ENCODE measurements at regions of chr12 and their contacts with region 1.

Region 1: DNA sequence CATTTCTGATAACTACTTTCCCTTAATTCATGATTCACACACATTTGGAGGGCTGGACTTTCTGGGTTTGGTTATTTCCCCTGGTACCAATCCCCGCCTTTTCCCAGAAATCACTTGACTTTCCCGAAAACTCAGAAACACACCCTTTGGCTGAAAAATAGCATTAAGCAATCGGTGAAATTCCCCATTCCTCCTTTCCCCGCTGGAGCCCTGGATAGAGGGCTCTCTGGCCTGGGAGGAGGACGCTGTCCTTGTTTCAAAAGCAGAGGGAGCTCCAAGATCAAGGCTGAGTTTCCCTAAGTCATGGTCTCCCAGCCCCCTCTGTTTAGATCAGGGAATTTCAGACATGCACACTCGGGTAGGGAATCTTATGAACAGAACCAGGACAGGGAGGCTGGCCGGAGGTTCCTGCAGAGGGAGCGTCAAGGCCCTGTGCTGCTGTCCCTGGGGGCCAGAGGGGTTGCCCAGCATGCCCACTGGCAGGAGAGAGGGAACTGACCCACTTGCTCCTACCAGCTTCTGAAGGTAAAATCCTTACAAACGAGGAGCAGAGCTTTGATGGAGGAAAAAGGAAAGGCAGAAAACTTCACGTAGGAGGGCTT is at the start of gene C1S:
- DNase-seq: peak; percentile 98
- H3K4me3 Mint-ChIP-seq: peak within 1 kb of the TSS; percentile 63
- H3K27ac Mint-ChIP-seq: peak within 1 kb of the TSS; percentile 87
- H3K4me1 Mint-ChIP-seq: peaks cover 20% of the 10 kb centered on the region
- H3K27me3 Mint-ChIP-seq: peaks cover under 1% of the 10 kb centered on the region
- CTCF ChIP-seq: peak; percentile 70
- total RNA-seq, gene C1S: 6.0 and 11.5 TPM in 2 replicates

Region 2: GRCh38 chr12:6937481-6938297 is 122.8 kb before region 1 on chr12:
- CTCF ChIA-PET with region 1: no interaction called
- POLR2A ChIA-PET with region 1: no interaction called
- intact Hi-C with region 1: no loop called
- DNase-seq: peak; percentile 94
- H3K4me3 Mint-ChIP-seq: peak overlapping the region; percentile 71
- H3K27ac Mint-ChIP-seq: peak overlapping the region; percentile 52
- H3K4me1 Mint-ChIP-seq: peaks cover 31% of the 10 kb centered on the region
- H3K27me3 Mint-ChIP-seq: no peaks in the 10 kb centered on the region
- CTCF ChIP-seq: peak; percentile 88

Region 3: DNA sequence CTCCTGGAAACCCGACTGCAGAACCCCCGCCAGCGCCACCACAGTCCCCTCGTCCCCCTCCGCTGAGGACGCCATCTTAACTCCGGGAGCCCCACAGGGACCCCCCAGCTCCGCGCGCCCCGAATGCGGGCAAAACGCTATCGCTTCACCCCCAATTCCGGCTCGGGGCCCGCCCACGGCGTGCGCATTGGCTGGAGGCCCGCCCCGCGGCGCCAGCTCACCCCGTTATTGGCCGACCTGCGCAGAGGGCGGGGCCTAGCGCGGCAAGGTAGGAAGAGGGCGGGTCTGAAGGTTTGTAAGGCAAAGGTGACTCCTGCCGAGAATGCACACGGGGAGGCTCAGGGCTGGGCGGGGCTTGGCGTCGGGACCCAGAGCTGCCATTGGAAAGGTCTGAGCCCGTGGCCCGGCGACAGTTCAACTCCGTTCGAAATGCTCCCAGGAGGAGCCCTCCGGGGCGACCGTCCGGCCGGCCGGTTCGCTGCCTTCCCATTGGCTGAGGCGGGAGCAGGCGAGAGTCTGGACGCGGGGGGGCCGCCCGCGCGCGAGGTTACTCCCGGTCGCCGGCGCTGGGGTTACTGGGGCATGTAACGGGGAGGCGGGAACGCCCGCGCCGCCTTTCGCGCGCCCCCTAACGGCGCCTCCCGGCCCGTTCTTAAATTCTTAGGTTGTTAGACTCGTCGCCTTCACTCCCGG is 42.0 kb before region 1 on chr12 and contains the start of gene LPCAT3:
- CTCF ChIA-PET with region 1: interaction called, 4 read pairs
- POLR2A ChIA-PET with region 1: interaction called, 12 read pairs
- intact Hi-C with region 1: no loop called
- DNase-seq: peak; percentile 96
- H3K4me3 Mint-ChIP-seq: peak within 1 kb of the TSS; percentile 80
- H3K27ac Mint-ChIP-seq: peak within 1 kb of the TSS; percentile 29
- H3K4me1 Mint-ChIP-seq: peaks cover 32% of the 10 kb centered on the region
- H3K27me3 Mint-ChIP-seq: no peaks in the 10 kb centered on the region
- CTCF ChIP-seq: peak; percentile 77
- total RNA-seq, gene LPCAT3: 14.4 and 15.4 TPM in 2 replicates

Region 4: DNA sequence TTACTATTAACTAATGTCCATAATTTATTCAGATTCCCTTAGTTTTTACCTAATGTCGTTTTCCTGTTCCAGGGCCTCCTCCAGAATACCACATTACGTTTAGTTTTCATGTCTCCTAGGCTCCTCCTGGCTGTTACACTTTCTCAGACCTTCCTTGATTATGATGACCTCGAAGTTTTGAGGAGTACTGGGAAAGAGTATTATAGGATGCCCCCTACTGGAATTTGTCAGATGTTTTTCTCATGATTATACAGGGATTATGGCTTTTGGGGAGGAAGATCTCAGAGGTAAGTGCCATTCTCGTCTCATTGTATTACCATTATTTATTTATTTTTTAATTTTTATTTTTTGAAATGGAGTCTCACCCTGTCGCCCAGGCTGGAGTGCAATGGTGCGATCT is 17.6 kb before region 1 on chr12:
- CTCF ChIA-PET with region 1: interaction called, 20 read pairs
- POLR2A ChIA-PET with region 1: interaction called, 3 read pairs
- intact Hi-C with region 1: no loop called
- DNase-seq: peak; percentile 71
- H3K4me3 Mint-ChIP-seq: no peak overlapping the region
- H3K27ac Mint-ChIP-seq: peak overlapping the region; percentile 25
- H3K4me1 Mint-ChIP-seq: peaks cover 23% of the 10 kb centered on the region
- H3K27me3 Mint-ChIP-seq: no peaks in the 10 kb centered on the region
- CTCF ChIP-seq: peak; percentile 34

Region 5: GRCh38 chr12:7079826-7080125 is 19.3 kb after region 1 on chr12:
- CTCF ChIA-PET with region 1: interaction called, 24 read pairs
- POLR2A ChIA-PET with region 1: interaction called, 16 read pairs
- intact Hi-C with region 1: loop called (anchors 1 kb)
- DNase-seq: peak; percentile 89
- H3K4me3 Mint-ChIP-seq: peak overlapping the region; percentile 46
- H3K27ac Mint-ChIP-seq: peak overlapping the region; percentile 73
- H3K4me1 Mint-ChIP-seq: peaks cover 26% of the 10 kb centered on the region
- H3K27me3 Mint-ChIP-seq: no peaks in the 10 kb centered on the region
- CTCF ChIP-seq: no peak

Region 6: GRCh38 chr12:7092229-7092985 is 32.0 kb after region 1 on chr12 and contains the start of gene C1R:
- CTCF ChIA-PET with region 1: interaction called, 116 read pairs
- POLR2A ChIA-PET with region 1: interaction called, 96 read pairs
- intact Hi-C with region 1: loop called (anchors 1 kb)
- DNase-seq: peak; percentile 88
- H3K4me3 Mint-ChIP-seq: peak within 1 kb of the TSS; percentile 79
- H3K27ac Mint-ChIP-seq: peak within 1 kb of the TSS; percentile 93
- H3K4me1 Mint-ChIP-seq: peaks cover 26% of the 10 kb centered on the region
- H3K27me3 Mint-ChIP-seq: no peaks in the 10 kb centered on the region
- CTCF ChIP-seq: peak; percentile 75
- total RNA-seq, gene C1R: 13.1 and 16.7 TPM in 2 replicates

Region 7: GRCh38 chr12:7188562-7189397 is 128.3 kb after region 1 on chr12:
- CTCF ChIA-PET with region 1: interaction called, 4 read pairs
- POLR2A ChIA-PET with region 1: no interaction called
- intact Hi-C with region 1: loop called (anchors 1 kb)
- DNase-seq: peak; percentile 84
- H3K4me3 Mint-ChIP-seq: peak overlapping the region; percentile 93
- H3K27ac Mint-ChIP-seq: peak overlapping the region; percentile 98
- H3K4me1 Mint-ChIP-seq: peaks cover 27% of the 10 kb centered on the region
- H3K27me3 Mint-ChIP-seq: no peaks in the 10 kb centered on the region
- CTCF ChIP-seq: peak; percentile 61

Region 8: DNA sequence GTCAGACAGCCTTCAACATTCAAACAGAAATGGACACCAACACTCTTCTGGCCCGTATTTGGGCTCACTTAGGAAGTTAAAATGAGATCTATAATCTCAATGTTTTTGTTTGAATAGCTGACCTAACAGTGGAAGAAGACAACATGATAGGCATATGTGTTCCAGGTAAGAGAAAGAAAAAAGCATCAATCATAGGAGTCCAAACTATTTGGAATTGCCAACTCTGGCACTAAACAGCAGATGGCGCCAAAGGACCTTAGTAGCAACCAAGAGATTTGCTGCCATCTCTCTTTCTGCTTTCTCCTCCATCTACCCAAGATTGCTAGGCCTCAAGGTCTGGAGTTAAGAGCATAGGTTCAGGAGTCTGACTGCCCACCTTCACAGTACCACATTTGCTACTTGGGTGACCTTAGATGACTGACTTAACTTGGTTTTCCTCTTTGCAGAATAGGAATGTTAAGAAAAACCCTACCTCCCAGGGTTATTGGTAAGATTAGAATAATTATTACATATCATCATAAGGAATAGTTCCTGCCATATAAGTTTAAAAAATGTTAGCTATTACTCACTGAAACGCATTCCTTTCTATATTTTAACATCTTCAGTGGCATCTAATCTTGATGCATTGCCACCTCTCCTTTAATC is 159.3 kb after region 1 on chr12:
- CTCF ChIA-PET with region 1: no interaction called
- POLR2A ChIA-PET with region 1: no interaction called
- intact Hi-C with region 1: loop called (anchors 1 kb)
- DNase-seq: peak; percentile 80
- H3K4me3 Mint-ChIP-seq: no peak overlapping the region
- H3K27ac Mint-ChIP-seq: no peak overlapping the region
- H3K4me1 Mint-ChIP-seq: no peaks in the 10 kb centered on the region
- H3K27me3 Mint-ChIP-seq: peaks cover 23% of the 10 kb centered on the region
- CTCF ChIP-seq: peak; percentile 84

Region 9: GRCh38 chr12:7656121-7656520 is 595.7 kb after region 1 on chr12:
- CTCF ChIA-PET with region 1: no interaction called
- POLR2A ChIA-PET with region 1: no interaction called
- intact Hi-C with region 1: no loop called
- DNase-seq: no peak
- H3K4me3 Mint-ChIP-seq: no peak overlapping the region
- H3K27ac Mint-ChIP-seq: no peak overlapping the region
- H3K4me1 Mint-ChIP-seq: no peaks in the 10 kb centered on the region
- H3K27me3 Mint-ChIP-seq: peaks cover 11% of the 10 kb centered on the region
- CTCF ChIP-seq: no peak

Measured in MCF 10A (cell line).